Ovary (tissue), 10 donors: ENCODE measurements at regions of chr14 and their contacts with region 1.

Region 1: DNA sequence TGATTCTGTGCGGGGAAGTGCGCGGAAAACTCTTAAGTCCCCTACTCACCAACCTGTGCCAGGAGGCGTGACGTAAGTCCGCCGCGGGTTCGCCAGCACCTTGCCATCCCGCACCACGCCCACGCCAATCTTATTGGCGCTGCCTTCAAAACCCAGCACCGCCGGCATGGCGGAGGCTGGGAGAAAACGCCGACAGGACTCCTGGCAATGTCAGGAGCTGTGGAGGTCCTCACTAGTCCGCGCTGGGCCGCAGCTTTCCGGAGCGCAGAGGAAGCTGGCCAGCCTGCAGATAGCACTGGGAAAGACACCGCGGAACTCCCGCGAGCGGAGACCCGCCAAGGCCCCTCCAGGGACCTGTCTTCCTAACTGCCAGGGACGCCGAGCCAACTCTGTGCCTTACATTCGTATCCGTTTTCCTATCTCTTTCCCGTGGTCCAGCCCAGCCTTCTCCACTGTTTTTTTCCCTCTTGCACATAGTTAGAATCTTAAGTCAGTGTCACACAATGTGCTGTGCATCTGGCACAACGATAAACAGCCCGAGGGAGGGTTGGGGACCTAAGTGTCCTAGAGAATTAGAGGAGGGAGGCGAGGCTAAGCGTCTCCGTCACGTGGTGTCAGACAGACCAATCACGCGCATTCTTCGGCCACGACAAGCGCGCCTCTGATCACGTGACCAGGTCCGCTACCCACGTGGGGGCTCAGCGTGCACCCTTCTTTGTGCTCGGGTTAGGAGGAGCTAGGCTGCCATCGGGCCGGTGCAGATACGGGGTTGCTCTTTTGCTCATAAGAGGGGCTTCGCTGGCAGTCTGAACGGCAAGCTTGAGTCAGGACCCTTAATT is at the starts of genes APEX1 and OSGEP:
- DNase-seq: peak; percentile 96 to 98 (median 98)
- H3K4me3 ChIP-seq: peak within 1 kb of the TSS; percentile 76
- H3K27ac ChIP-seq: peak within 1 kb of the TSS; percentile 68 to 83
- H3K4me1 ChIP-seq: peaks cover 2% of the 10 kb centered on the region
- H3K27me3 ChIP-seq: no peaks in the 10 kb centered on the region
- CTCF ChIP-seq: no peak
- EP300 ChIP-seq: no peak
- POLR2A ChIP-seq: peak; percentile 39
- total RNA-seq, gene APEX1: 141 to 172 (median 159) TPM
- total RNA-seq, gene OSGEP: 31.8 to 68.8 (median 37.6) TPM

Region 2: DNA sequence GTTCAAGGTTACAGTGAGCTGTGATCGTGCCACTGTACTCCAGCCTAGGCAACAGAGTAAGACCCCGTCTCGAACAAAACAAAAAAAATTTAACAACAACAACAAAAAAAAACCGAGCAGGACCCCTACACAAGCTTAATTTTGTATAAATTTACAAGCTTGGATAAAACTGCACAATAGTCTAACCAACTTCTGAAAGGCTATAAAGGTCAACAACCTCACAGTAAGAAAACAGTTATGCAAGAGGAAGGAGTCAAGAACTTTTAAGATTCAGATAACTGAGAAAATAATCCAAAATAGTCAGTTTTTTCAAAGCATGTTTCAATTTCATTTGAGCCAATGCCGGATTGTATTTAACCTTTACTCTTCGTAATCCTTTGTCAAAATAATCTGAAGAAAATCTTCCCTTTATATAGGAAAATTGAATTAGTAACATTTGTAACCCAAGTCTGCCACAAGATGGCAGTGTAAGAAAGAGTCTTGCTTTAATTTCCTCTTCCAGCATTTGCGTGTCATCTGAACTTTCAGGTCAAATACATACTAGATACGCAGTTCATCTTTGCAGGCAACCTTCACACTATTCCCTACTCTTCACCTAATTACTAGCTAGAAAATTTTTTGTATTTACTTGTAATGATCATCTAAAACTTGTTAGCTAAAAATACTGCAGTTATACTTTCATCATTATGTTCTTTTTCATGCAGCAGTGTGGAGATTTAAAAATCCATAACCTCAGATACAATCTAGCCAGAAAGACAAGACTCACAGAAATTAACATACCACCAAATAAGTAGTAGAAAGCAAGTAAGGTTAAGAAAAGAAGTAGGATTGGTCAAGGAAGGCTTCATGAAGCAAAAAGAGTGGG is 127.5 kb before region 1 on chr14:
- intact Hi-C with region 1: loop called in 1 of 4 experiments (anchors 10 kb)
- DNase-seq: no peak
- H3K4me3 ChIP-seq: no peak overlapping the region
- H3K27ac ChIP-seq: no peak overlapping the region
- H3K4me1 ChIP-seq: no peaks in the 10 kb centered on the region
- H3K27me3 ChIP-seq: no peaks in the 10 kb centered on the region
- CTCF ChIP-seq: peak; percentile 25 to 81 (median 70)
- EP300 ChIP-seq: no peak
- POLR2A ChIP-seq: no peak

Region 3: DNA sequence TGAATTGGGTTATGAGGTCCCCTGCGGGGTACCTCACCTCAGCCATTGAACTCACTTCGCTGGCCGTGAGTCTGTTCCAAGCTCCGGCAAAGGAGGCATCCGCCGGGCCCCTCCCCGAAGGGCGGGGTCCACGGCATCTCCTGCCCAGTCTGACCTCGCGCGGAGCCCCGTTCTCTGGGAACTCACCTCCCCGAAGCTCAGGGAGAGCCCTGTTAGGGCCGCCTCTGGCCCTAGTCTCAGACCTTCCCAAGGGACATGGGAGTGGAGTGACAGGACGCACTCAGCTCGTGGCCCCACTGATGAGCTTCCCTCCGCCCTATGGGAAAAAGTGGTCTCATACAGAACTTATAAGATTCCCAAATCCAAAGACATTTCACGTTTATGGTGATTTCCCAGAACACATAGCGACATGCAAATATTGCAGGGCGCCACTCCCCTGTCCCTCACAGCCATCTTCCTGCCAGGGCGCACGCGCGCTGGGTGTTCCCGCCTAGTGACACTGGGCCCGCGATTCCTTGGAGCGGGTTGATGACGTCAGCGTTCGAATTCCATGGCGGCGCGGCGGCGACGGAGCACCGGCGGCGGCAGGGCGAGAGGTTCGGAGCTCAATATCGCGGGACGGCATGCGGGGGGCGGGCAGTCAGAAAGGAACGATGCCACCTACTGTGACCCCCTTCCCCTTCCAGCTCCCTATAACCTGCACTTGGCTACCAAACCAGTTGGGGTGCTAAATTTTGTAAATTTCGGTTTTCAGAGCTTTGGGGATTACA is 111.5 kb before region 1 on chr14 and contains the start of gene PARP2:
- intact Hi-C with region 1: loop called in 1 of 4 experiments (anchors 5 kb)
- DNase-seq: peak; percentile 96 to 97 (median 97)
- H3K4me3 ChIP-seq: peak within 1 kb of the TSS; percentile 60
- H3K27ac ChIP-seq: peak within 1 kb of the TSS; percentile 89 to 92
- H3K4me1 ChIP-seq: no peaks in the 10 kb centered on the region
- H3K27me3 ChIP-seq: no peaks in the 10 kb centered on the region
- CTCF ChIP-seq: peak in 1 of 3 donors; percentile 16
- EP300 ChIP-seq: peak; percentile 76
- POLR2A ChIP-seq: peak; percentile 89
- total RNA-seq, gene PARP2: 7.1 to 25.6 (median 22.8) TPM

Region 4: GRCh38 chr14:20417250-20418174 is 37.2 kb before region 1 on chr14:
- intact Hi-C with region 1: no loop called
- DNase-seq: no peak
- H3K4me3 ChIP-seq: no peak overlapping the region
- H3K27ac ChIP-seq: no peak overlapping the region
- H3K4me1 ChIP-seq: no peaks in the 10 kb centered on the region
- H3K27me3 ChIP-seq: no peaks in the 10 kb centered on the region
- CTCF ChIP-seq: no peak
- EP300 ChIP-seq: no peak
- POLR2A ChIP-seq: no peak

Region 5: GRCh38 chr14:20530771-20531571 is 76.2 kb after region 1 on chr14:
- intact Hi-C with region 1: no loop called
- DNase-seq: peak; percentile 9 to 54 (median 37)
- H3K4me3 ChIP-seq: no peak overlapping the region
- H3K27ac ChIP-seq: no peak overlapping the region
- H3K4me1 ChIP-seq: no peaks in the 10 kb centered on the region
- H3K27me3 ChIP-seq: no peaks in the 10 kb centered on the region
- CTCF ChIP-seq: no peak
- EP300 ChIP-seq: no peak
- POLR2A ChIP-seq: no peak